ENCODE measurements at regions of chr9 and their contacts with region 1.

Region 1: GRCh38 chr9:98074115-98074990 is 17.8 kb downstream of the NANS start:
- DNase-seq: peak; percentile 74
- ATAC-seq: peak; percentile 57
- H3K4me3 ChIP-seq: no peak overlapping the region
- H3K4me3 Mint-ChIP-seq: no peak overlapping the region
- H3K27ac ChIP-seq: no peak overlapping the region
- H3K27ac Mint-ChIP-seq: peak overlapping the region; percentile 56
- H3K4me1 ChIP-seq: peaks cover 3 to 13% of the 10 kb centered on the region in 2 donors
- H3K4me1 Mint-ChIP-seq: peaks cover 11% of the 10 kb centered on the region
- H3K27me3 ChIP-seq: no peaks in the 10 kb centered on the region
- H3K27me3 Mint-ChIP-seq: no peaks in the 10 kb centered on the region
- CTCF ChIP-seq: peak; percentile 98

Region 2: DNA sequence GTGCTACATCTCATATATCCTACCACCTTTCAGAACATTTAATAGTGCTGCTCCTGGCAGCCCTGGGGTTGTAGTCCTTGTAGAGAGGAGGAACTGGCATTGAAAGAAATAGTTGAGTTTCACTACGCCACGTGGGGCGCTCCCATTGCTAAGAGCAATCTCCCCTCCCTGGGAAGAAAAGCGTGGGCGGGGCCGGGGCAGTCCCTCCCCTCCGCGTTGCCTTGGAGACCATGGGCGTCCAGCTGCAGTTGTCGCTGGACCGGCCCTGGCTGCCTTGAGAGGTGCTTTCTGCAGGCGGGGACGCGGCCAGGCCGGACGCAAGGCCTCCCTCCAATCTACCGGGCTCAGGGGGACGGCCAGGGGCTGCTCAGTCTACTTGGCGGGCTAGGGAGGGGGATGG is 767.3 kb before region 1 on chr9:
- CTCF ChIA-PET with region 1: no interaction called
- POLR2A ChIA-PET with region 1: no interaction called
- intact Hi-C with region 1: no loop called
- DNase-seq: no peak
- ATAC-seq: no peak
- H3K4me3 ChIP-seq: no peak overlapping the region
- H3K4me3 Mint-ChIP-seq: no peak overlapping the region
- H3K27ac ChIP-seq: no peak overlapping the region
- H3K27ac Mint-ChIP-seq: no peak overlapping the region
- H3K4me1 ChIP-seq: no peaks in the 10 kb centered on the region
- H3K4me1 Mint-ChIP-seq: no peaks in the 10 kb centered on the region
- H3K27me3 ChIP-seq: no peaks in the 10 kb centered on the region
- H3K27me3 Mint-ChIP-seq: peaks cover 13% of the 10 kb centered on the region
- CTCF ChIP-seq: no peak

Region 3: DNA sequence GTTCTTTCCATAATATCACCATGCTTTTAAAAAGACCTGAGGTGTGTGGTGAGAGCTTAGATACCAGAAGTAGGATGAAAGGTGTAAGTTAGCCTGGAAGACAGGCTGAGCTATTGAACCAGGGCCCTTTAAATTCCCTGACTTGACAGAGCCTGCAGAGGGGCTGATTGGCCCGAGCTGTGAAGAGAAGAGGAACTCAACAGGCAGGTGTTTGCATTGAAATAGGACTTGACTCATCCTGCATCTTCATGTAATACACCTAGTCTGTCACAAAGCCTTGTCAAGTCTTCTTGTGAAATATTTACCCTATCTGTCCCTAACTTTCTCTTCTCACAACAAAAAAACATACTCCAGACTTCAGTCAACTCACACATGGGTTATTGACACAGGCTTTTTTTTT is 107.9 kb before region 1 on chr9:
- CTCF ChIA-PET with region 1: no interaction called
- POLR2A ChIA-PET with region 1: no interaction called
- intact Hi-C with region 1: no loop called
- DNase-seq: no peak
- ATAC-seq: no peak
- H3K4me3 ChIP-seq: no peak overlapping the region
- H3K4me3 Mint-ChIP-seq: no peak overlapping the region
- H3K27ac ChIP-seq: no peak overlapping the region
- H3K27ac Mint-ChIP-seq: no peak overlapping the region
- H3K4me1 ChIP-seq: no peaks in the 10 kb centered on the region
- H3K4me1 Mint-ChIP-seq: no peaks in the 10 kb centered on the region
- H3K27me3 ChIP-seq: peaks cover 0 to 6% (median 2%) of the 10 kb centered on the region in 4 experiments
- H3K27me3 Mint-ChIP-seq: peaks cover 13% of the 10 kb centered on the region
- CTCF ChIP-seq: no peak

Region 4: GRCh38 chr9:98101868-98102273 is 27.5 kb after region 1 on chr9:
- CTCF ChIA-PET with region 1: interaction called, 17 read pairs
- POLR2A ChIA-PET with region 1: no interaction called
- intact Hi-C with region 1: no loop called
- DNase-seq: peak; percentile 91
- ATAC-seq: peak; percentile 98
- H3K4me3 ChIP-seq: peak overlapping the region in 1 of 5 experiments; percentile 38
- H3K4me3 Mint-ChIP-seq: peak overlapping the region; percentile 68
- H3K27ac ChIP-seq: peak overlapping the region; percentile 66 to 74
- H3K27ac Mint-ChIP-seq: peak overlapping the region; percentile 81
- H3K4me1 ChIP-seq: peaks cover 82 to 87% of the 10 kb centered on the region in 2 donors
- H3K4me1 Mint-ChIP-seq: peaks cover 77% of the 10 kb centered on the region
- H3K27me3 ChIP-seq: no peaks in the 10 kb centered on the region
- H3K27me3 Mint-ChIP-seq: no peaks in the 10 kb centered on the region
- CTCF ChIP-seq: no peak

Region 5: GRCh38 chr9:98118640-98119601 is 44.6 kb after region 1 on chr9 and contains the start of gene TRIM14:
- CTCF ChIA-PET with region 1: interaction called, 9 read pairs
- POLR2A ChIA-PET with region 1: interaction called, 4 read pairs
- intact Hi-C with region 1: loop called (anchors 2 kb)
- DNase-seq: peak; percentile 70
- ATAC-seq: peak; percentile 71
- H3K4me3 ChIP-seq: peak within 1 kb of the TSS; percentile 80 to 91 (median 89)
- H3K4me3 Mint-ChIP-seq: peak within 1 kb of the TSS; percentile 88
- H3K27ac ChIP-seq: peak within 1 kb of the TSS; percentile 69 to 78
- H3K27ac Mint-ChIP-seq: peak within 1 kb of the TSS; percentile 95
- H3K4me1 ChIP-seq: peaks cover 28 to 33% of the 10 kb centered on the region in 2 donors
- H3K4me1 Mint-ChIP-seq: peaks cover 45% of the 10 kb centered on the region
- H3K27me3 ChIP-seq: no peaks in the 10 kb centered on the region
- H3K27me3 Mint-ChIP-seq: no peaks in the 10 kb centered on the region
- CTCF ChIP-seq: no peak
- total RNA-seq, gene TRIM14: 22.4 and 22.5 TPM in 2 replicates

Region 6: DNA sequence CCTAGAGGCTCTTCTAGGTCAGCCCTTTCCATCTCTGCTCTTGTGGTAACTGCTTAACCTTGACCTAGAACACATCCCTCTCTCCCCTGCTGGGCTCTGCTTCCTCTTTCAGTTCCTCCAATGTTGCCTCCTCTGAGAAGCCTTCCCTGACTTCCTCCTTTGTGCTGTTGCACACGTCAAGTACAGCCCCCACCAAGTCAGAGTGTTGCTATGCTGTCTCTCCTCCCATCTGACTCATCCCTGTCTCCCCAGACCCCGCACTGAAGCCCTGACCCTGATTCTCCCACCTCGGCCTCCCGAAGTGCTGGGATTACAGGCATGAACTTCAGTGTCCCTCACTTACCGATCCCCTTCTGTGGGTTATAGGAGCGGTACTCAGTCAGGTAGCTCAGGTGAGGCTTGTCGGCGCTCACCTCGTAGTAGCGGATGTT is 55.1 kb after region 1 on chr9:
- CTCF ChIA-PET with region 1: interaction called, 14 read pairs
- POLR2A ChIA-PET with region 1: interaction called, 4 read pairs
- intact Hi-C with region 1: no loop called
- DNase-seq: peak; percentile 81
- ATAC-seq: peak; percentile 91
- H3K4me3 ChIP-seq: no peak overlapping the region
- H3K4me3 Mint-ChIP-seq: peak overlapping the region; percentile 43
- H3K27ac ChIP-seq: peak overlapping the region; percentile 8 to 42
- H3K27ac Mint-ChIP-seq: peak overlapping the region; percentile 80
- H3K4me1 ChIP-seq: peaks cover 20 to 36% of the 10 kb centered on the region in 2 donors
- H3K4me1 Mint-ChIP-seq: peaks cover 33% of the 10 kb centered on the region
- H3K27me3 ChIP-seq: no peaks in the 10 kb centered on the region
- H3K27me3 Mint-ChIP-seq: no peaks in the 10 kb centered on the region
- CTCF ChIP-seq: no peak

Region 7: GRCh38 chr9:98207606-98208005 is 133.3 kb after region 1 on chr9:
- CTCF ChIA-PET with region 1: interaction called, 8 read pairs
- POLR2A ChIA-PET with region 1: no interaction called
- intact Hi-C with region 1: loop called (anchors 1 kb)
- DNase-seq: no peak
- ATAC-seq: no peak
- H3K4me3 ChIP-seq: no peak overlapping the region
- H3K4me3 Mint-ChIP-seq: no peak overlapping the region
- H3K27ac ChIP-seq: no peak overlapping the region
- H3K27ac Mint-ChIP-seq: no peak overlapping the region
- H3K4me1 ChIP-seq: peaks cover 4 to 10% of the 10 kb centered on the region in 2 donors
- H3K4me1 Mint-ChIP-seq: peaks cover 5% of the 10 kb centered on the region
- H3K27me3 ChIP-seq: no peaks in the 10 kb centered on the region
- H3K27me3 Mint-ChIP-seq: no peaks in the 10 kb centered on the region
- CTCF ChIP-seq: no peak

Region 8: DNA sequence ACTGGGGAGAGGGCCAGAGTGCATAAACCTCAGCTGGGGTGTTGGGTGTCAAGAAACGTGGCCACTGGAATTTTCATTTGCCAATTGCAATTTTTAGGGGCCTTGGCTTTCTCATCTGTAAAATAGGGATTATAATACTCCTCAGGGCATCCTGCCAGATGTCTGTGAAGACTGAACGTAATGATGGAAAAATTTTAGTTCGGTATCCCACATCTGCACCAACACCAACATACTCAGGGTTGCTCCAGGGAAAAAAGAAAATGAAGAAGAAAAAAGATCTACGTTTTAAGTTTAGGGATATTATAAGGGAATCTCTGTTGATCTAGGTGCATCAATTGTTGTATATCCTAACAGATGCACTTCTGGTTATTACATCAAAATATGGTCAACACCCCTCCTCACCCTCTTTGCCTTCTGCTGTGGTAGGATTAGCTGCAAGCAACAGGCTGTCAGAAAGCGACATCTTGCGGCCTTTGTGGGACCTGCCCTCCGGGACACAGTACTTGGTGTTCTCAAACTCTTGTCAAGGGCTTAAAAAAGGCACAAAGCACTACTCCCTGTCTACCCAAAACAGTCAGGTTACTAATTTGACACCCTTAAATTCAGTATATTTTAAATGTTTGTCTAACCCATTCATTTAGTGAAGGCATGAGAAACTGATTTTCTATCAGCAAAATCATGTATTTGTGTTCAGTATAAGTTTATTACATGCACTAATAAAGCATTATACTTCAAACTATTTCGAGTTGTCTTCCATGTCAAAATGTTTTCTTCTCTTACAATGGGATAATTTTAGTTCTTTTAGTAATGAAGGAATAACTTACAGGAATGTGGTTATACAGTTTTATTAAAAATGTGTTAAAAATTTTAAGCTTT is 189.4 kb after region 1 on chr9:
- CTCF ChIA-PET with region 1: interaction called, 46 read pairs
- POLR2A ChIA-PET with region 1: interaction called, 8 read pairs
- intact Hi-C with region 1: loop called (anchors 1 kb)
- DNase-seq: peak; percentile 85
- ATAC-seq: peak; percentile 100
- H3K4me3 ChIP-seq: no peak overlapping the region
- H3K4me3 Mint-ChIP-seq: no peak overlapping the region
- H3K27ac ChIP-seq: no peak overlapping the region
- H3K27ac Mint-ChIP-seq: no peak overlapping the region
- H3K4me1 ChIP-seq: no peaks in the 10 kb centered on the region
- H3K4me1 Mint-ChIP-seq: no peaks in the 10 kb centered on the region
- H3K27me3 ChIP-seq: no peaks in the 10 kb centered on the region
- H3K27me3 Mint-ChIP-seq: peaks cover 21% of the 10 kb centered on the region
- CTCF ChIP-seq: peak; percentile 94

Region 9: DNA sequence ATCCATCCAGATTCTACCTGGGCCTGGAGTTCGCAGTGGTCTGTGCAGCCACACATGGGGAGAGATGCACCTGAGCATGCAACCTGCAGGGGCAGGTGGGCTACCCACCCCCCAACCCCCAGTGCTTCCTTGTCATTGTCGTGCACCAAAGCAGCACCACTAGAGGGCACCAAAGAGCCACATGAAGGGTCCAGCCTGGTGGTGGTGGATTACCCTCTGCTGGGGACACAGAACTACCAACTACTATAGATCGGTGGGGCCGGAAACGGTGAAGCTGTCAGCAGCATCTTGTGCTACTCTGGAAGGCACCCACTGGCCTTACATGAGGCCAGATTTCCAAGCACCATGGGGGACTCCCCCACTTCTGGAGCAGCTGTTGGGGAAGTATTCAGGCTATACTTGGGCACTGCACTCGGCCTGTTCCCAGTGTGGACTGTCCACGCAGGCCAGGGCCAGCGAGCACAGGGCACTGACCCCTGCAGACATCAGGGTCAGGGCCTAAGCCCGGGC is 241.3 kb after region 1 on chr9:
- CTCF ChIA-PET with region 1: no interaction called
- POLR2A ChIA-PET with region 1: no interaction called
- intact Hi-C with region 1: loop called (anchors 1 kb)
- DNase-seq: peak; percentile 85
- ATAC-seq: peak; percentile 92
- H3K4me3 ChIP-seq: no peak overlapping the region
- H3K4me3 Mint-ChIP-seq: no peak overlapping the region
- H3K27ac ChIP-seq: no peak overlapping the region
- H3K27ac Mint-ChIP-seq: no peak overlapping the region
- H3K4me1 ChIP-seq: no peaks in the 10 kb centered on the region
- H3K4me1 Mint-ChIP-seq: peaks cover 2% of the 10 kb centered on the region
- H3K27me3 ChIP-seq: peaks cover 0 to 4% (median 1%) of the 10 kb centered on the region in 4 experiments
- H3K27me3 Mint-ChIP-seq: no peaks in the 10 kb centered on the region
- CTCF ChIP-seq: peak; percentile 88

Measured in B cell (primary cell).